ENCODE measurements at regions of chr12 and their contacts with region 1.

Region 1: GRCh38 chr12:108731105-108731865 is at the start of gene CORO1C:
- DNase-seq: peak; percentile 98
- H3K4me3 ChIP-seq: peak within 1 kb of the TSS; percentile 90
- H3K27ac ChIP-seq: peak within 1 kb of the TSS; percentile 97
- H3K4me1 ChIP-seq: peaks cover 58% of the 10 kb centered on the region
- H3K27me3 ChIP-seq: no peaks in the 10 kb centered on the region
- CTCF ChIP-seq: peak; percentile 93
- total RNA-seq, gene CORO1C: 59.6 TPM

Region 2: DNA sequence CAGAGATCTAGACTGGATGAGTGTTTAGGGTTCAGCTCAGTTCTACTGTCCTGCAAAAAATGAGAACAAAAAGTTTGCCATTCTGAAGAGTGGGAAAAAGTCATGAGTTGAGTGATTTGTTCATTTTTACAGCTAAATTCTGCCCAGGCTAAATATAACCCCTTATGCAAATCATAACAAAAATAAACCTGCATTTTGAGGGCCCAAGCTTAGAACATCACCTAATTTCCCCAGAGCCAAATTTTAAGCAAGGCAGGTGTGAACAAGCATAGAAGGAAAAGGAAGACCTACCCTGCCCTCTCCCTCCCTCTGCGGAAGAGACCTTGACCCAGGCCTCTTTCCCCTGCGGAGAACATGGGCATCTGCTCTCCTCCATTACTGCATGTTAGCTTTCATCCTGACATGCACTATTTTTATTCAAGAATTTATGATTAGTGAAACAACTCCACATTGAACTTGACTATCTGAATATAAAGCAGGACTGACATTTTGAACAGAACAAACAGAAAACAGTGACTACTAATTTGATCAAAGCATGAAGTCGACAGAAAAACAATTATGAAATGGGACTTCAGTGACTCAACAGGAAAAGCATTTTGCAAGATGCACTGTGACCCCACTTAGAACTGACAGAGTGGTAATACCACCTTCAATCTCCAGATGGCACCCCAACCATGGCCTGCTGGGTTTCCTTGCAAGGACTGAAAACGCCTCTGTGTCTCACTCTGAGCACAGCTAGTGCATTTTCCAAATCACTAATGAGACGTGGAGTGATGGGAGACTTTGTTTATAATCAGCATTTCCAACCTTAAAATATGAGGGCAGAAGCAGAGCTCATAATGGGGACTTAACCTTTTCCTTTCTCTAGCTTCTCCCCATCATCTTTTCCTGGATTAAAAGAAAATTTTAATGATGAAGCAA is 66.7 kb before region 1 on chr12:
- intact Hi-C with region 1: loop called (anchors 10 kb)
- DNase-seq: peak; percentile 76
- H3K4me3 ChIP-seq: no peak overlapping the region
- H3K27ac ChIP-seq: peak overlapping the region; percentile 86
- H3K4me1 ChIP-seq: peaks cover 59% of the 10 kb centered on the region
- H3K27me3 ChIP-seq: no peaks in the 10 kb centered on the region
- CTCF ChIP-seq: peak; percentile 96

Region 3: DNA sequence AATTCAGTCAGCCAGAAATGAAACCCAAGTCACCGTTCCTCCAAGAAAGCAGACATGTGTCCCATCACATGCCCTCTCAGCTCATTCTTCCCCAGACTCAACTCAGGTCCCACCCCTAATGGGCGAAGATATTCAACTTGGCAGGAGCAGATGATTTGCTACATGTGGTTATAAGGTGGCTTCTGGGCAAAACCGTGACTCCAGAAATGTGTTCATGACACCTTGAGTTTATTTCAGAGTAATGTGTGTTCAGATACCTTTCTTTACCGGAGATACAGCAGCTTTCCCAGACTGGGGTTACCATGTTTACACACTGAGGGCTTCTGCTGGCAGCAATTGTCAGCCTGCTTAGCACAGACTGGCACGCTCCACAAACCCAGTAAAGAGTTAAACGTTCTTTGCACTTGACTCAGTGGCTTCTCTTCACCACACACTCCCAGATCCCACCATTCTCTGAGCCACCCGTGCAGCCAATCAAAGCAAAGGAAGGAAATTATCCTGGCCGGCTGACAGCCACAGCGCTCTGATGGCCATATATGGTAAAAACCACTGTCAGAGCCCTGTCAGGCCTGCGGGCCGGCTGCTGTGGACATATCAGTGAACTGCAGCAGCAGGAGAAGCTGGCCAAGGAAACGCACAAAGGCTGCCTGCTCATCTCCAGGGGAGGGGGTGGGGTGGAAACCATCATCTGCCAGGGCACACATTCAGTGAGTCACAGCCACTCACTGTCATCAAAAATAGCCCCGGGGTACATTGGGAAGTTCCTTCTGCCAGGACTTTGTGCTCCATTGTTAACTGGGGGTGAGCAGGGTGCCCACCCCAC is 39.9 kb before region 1 on chr12:
- intact Hi-C with region 1: loop called (anchors 5 kb)
- DNase-seq: peak; percentile 94
- H3K4me3 ChIP-seq: peak overlapping the region; percentile 50
- H3K27ac ChIP-seq: peak overlapping the region; percentile 96
- H3K4me1 ChIP-seq: peaks cover 89% of the 10 kb centered on the region
- H3K27me3 ChIP-seq: no peaks in the 10 kb centered on the region
- CTCF ChIP-seq: peak; percentile 69